ENCODE measurements at regions of chr17 and their contacts with region 1.

Region 1: DNA sequence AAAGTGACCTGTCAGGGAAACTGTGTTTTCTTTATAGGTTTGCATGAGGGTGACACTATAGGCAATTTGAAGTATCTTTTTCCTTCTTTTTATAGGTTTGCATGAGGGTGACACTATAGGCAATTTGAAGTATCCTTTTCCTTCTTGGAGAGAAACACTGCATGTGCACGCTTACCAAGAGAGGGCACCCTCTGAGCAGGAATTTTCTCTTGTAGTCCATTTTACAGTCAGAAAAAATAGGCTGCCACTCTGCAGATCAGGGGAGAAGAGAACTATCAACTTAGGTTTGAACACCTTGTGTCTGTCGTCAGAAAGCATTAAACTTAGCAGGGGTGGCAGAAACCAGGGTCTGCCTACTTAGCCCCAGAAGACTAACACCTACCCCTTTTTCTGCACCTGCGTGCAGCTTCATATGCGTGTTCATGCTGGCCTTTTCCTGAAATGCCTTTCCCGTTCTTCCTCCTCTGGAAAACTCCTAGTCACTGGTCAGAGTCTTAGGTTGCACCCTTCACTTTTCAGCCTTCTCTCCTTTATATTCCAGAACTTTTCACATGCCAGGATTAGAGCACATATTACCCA is 16.4 kb upstream of the SMIM36 start:
- DNase-seq: peak in 3 of 10 donors; percentile 18 to 34 (median 28)

Region 2: DNA sequence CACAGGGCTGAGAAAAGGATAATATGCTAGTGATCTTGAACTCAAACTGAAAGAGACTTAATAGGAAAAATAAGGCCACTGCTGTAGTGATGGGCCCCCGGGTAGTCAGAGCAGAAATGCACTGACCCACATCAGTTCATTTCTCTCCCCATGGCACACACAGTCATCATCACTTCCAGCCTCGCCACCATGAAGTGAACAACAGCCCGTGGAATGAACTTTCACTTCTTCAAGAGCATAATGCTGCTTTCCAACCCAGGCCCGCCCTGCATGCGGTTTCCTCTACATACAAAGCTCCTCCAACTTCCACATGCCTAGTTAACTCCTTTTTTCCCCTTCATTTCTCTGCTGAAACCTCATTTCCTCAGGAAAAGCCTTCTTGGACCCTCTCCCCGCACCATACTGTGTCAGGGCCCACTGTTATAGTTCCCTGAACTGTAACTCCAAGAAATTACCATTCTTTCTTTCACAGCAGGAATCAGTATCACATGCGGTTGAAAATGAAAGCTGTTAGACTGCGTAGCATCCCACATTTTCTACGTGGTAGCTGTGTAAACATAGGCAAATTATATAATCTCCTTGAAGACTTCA is 49.5 kb after region 1 on chr17:
- intact Hi-C with region 1: no loop called
- DNase-seq: peak in 3 of 10 donors; percentile 15 to 65 (median 49)

Region 3: GRCh38 chr17:55641676-55642081 is 114.0 kb after region 1 on chr17:
- intact Hi-C with region 1: loop called (anchors 5 kb)
- DNase-seq: peak; percentile 17 to 89 (median 51)

Region 4: DNA sequence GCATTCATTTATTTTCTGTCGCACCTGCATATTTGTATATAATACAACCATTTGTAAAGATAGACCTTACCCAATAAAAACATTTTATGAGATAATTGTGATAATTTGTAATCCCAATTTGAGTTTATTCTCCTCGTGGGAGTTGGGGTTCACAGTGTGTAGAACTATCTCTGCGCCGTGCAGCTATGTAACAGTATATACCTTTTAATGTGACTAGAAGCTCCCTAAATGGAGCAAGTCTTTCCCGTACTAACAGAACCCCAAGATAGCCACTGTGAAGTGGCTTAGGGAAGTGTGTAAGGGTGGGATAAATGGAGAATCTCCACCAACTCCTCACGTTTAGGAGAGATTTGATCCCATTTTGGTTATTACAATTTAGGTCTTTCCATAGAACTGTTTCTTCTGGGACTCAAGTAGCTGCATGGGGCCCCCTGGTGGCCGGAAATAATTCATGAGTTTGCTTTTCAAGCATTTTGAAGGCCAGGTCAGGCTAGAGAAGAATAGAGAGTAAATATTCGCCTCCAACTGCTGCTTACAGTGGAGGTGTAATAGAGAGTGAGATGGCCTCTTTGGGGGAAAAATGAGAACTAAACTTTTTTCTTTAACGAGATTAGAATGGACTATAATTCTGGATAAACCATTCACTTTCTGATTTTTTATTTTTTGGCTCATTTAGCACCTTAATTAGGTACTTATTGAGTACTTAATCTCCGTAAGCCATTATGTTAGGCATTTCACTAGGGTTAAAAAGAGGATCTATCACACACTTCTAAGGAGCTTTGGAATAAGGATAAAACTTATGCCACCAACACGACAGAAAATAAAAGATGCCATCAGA is 190.5 kb after region 1 on chr17:
- intact Hi-C with region 1: loop called (anchors 2 kb)
- DNase-seq: peak; percentile 35 to 93 (median 73)

Region 5: GRCh38 chr17:55770148-55770870 is 242.7 kb after region 1 on chr17:
- intact Hi-C with region 1: loop called (anchors 1 kb)
- DNase-seq: no peak

Measured in posterior cingulate gyrus (tissue), 11 donors.